Vagina (tissue), 2 donors: ENCODE measurements at regions of chr16 and their contacts with region 1.

Region 1: GRCh38 chr16:64782484-64782883 is 339.4 kb downstream of the CDH11 start:
- DNase-seq: no peak
- H3K4me3 ChIP-seq: no peak overlapping the region
- H3K27ac ChIP-seq: no peak overlapping the region
- H3K4me1 ChIP-seq: no peaks in the 10 kb centered on the region
- H3K27me3 ChIP-seq: no peaks in the 10 kb centered on the region
- CTCF ChIP-seq: no peak
- POLR2A ChIP-seq: no peak

Region 2: DNA sequence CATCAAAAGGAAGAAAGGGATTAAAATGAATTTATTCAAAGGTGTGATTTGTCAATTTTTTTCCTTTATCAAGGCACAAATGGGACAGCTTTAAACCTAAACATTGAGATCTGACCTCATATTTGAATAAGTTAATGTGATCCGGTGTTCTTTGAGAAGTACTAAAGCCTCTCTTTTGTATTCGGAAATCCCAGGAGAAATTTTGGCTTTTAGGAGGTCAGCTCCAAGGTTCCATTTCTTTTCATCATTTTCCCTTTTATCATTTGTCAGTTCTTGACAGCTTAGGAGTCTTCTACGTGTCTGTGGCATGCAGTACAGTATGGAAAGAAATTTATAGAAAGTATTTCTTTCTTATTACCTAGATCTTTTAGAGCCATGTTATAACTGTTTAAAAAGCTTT is 1872.9 kb before region 1 on chr16:
- intact Hi-C with region 1: loop called (anchors 5 kb)
- DNase-seq: no peak
- H3K4me3 ChIP-seq: no peak overlapping the region
- H3K27ac ChIP-seq: no peak overlapping the region
- H3K4me1 ChIP-seq: no peaks in the 10 kb centered on the region
- H3K27me3 ChIP-seq: no peaks in the 10 kb centered on the region
- CTCF ChIP-seq: no peak
- POLR2A ChIP-seq: no peak

Region 3: DNA sequence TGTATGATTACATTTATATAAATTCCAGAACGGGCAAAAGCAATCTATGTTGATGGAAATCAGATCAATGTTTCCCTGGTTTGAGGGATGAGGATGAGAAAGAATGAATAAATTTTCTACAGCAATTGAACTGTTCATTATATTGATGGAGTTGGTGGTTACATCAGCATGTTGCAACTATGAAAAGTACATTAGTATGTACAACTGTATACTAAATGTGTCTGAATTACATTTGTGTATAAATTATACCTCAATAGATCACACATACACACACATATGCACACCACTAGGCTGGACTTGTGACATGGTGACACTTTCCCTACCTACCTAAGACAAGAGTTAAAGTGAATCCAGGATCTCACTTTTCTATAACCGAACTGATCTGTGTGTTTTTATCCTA is 268.6 kb before region 1 on chr16:
- intact Hi-C with region 1: no loop called
- DNase-seq: no peak
- H3K4me3 ChIP-seq: no peak overlapping the region
- H3K27ac ChIP-seq: no peak overlapping the region
- H3K4me1 ChIP-seq: no peaks in the 10 kb centered on the region
- H3K27me3 ChIP-seq: no peaks in the 10 kb centered on the region
- CTCF ChIP-seq: no peak
- POLR2A ChIP-seq: no peak

Region 4: GRCh38 chr16:64648282-64648681 is 134.2 kb before region 1 on chr16:
- intact Hi-C with region 1: no loop called
- DNase-seq: no peak
- H3K4me3 ChIP-seq: no peak overlapping the region
- H3K27ac ChIP-seq: no peak overlapping the region
- H3K4me1 ChIP-seq: no peaks in the 10 kb centered on the region
- H3K27me3 ChIP-seq: no peaks in the 10 kb centered on the region
- CTCF ChIP-seq: no peak
- POLR2A ChIP-seq: no peak

Region 5: GRCh38 chr16:66295761-66296520 is 1513.5 kb after region 1 on chr16:
- intact Hi-C with region 1: loop called (anchors 10 kb)
- DNase-seq: peak; percentile 32 to 64
- H3K4me3 ChIP-seq: no peak overlapping the region
- H3K27ac ChIP-seq: no peak overlapping the region
- H3K4me1 ChIP-seq: no peaks in the 10 kb centered on the region
- H3K27me3 ChIP-seq: no peaks in the 10 kb centered on the region
- CTCF ChIP-seq: no peak
- POLR2A ChIP-seq: no peak